Transverse colon (tissue), 4 donors: ENCODE measurements at regions of chr12 and their contacts with region 1.

Region 1: DNA sequence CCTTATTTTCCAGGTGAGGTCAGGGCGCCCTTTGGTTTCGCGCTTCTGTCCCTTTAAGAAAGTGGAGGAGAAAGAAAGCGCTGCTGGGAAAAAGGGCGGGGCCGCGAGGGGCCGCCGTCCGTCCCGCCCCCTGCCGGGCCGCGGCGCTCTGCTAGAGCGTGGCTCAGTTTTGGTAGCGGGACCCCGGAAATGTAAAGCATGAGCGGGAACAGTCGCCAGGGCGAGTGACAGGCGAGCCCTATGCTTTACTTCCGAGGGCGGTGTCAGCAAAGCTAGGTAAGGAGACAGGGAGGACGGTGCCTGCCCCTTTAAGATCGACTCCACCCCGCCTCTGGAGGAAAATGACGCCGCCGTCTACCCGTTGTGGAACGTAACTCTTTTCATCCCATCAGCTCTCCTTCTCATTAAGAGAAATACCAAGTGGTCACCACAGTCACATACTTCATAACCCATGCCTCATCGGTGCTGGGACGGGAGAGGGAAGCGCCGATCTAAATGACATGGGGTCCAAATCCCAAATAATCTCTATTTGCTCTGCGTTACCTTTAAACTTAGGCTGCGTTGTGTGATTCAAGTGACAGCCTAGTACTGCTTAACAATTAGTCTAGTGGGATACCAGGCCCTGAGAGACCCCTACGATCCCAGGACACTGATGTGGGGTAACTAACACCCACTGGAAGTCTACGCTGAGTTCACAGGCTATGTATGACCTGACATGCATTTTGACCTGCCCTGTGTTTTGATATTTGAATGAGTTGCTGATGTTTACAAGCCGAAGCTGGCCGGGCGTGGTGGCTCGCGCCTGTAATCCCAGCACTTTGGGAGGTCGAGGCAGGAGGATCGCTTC is at the start of gene ETFBKMT:
- DNase-seq: peak; percentile 93
- H3K4me3 ChIP-seq: peak within 1 kb of the TSS; percentile 51 to 79 (median 68)
- H3K27ac ChIP-seq: peak within 1 kb of the TSS; percentile 90 to 96 (median 92)
- H3K4me1 ChIP-seq: peaks cover 3 to 11% (median 10%) of the 10 kb centered on the region in 4 donors
- H3K27me3 ChIP-seq: no peaks in the 10 kb centered on the region
- CTCF ChIP-seq: peak; percentile 36 to 78 (median 45)
- EP300 ChIP-seq: no peak
- POLR2A ChIP-seq: peak; percentile 67
- total RNA-seq, gene ETFBKMT: 0.40 to 3.8 (median 3.1) TPM

Region 2: DNA sequence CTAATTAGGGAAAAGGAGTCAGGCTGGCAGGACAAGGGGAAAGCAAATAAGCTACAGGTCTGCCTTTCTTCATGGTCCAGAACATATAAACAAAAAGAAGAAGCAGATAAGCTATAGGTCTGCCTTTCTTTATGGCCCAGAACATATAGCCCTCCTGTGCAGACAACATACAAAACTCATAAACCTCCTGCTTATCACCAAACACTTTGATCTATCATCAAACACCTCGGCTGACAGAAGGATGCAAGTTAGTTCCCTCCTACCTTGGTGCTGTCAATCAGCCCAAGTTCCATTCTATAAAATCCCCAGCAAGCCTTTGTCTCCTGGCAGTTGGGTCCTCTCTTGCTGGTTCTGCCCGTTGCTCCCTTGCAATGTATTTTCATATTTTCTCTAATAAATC is 46.3 kb after region 1 on chr12:
- in situ Hi-C with region 1: no loop called
- intact Hi-C with region 1: no loop called
- DNase-seq: no peak
- H3K4me3 ChIP-seq: no peak overlapping the region
- H3K27ac ChIP-seq: no peak overlapping the region
- H3K4me1 ChIP-seq: no peaks in the 10 kb centered on the region
- H3K27me3 ChIP-seq: no peaks in the 10 kb centered on the region
- CTCF ChIP-seq: no peak
- EP300 ChIP-seq: no peak
- POLR2A ChIP-seq: no peak

Region 3: GRCh38 chr12:31728917-31729640 is 69.8 kb after region 1 on chr12 and contains the start of gene AMN1:
- in situ Hi-C with region 1: no loop called
- intact Hi-C with region 1: loop called (anchors 10 kb)
- DNase-seq: peak; percentile 100
- H3K4me3 ChIP-seq: peak within 1 kb of the TSS; percentile 63 to 79 (median 70)
- H3K27ac ChIP-seq: peak within 1 kb of the TSS; percentile 96 to 98 (median 97)
- H3K4me1 ChIP-seq: peaks cover 9 to 33% (median 14%) of the 10 kb centered on the region in 4 donors
- H3K27me3 ChIP-seq: no peaks in the 10 kb centered on the region
- CTCF ChIP-seq: peak in 3 of 5 experiments; percentile 10 to 56 (median 49)
- EP300 ChIP-seq: no peak
- POLR2A ChIP-seq: peak; percentile 81
- total RNA-seq, gene AMN1: 5.7 to 10.5 (median 8.7) TPM in 3 of 4 donors, not detected in the other

Region 4: GRCh38 chr12:31959161-31959700 is 299.9 kb after region 1 on chr12 and contains the start of gene RESF1:
- in situ Hi-C with region 1: loop called in 2 of 4 experiments (anchors 25 kb)
- intact Hi-C with region 1: loop called (anchors 5 kb)
- DNase-seq: peak; percentile 93
- H3K4me3 ChIP-seq: peak within 1 kb of the TSS; percentile 70 to 90 (median 78)
- H3K27ac ChIP-seq: peak within 1 kb of the TSS; percentile 94 to 98 (median 96)
- H3K4me1 ChIP-seq: peaks cover 10 to 30% (median 20%) of the 10 kb centered on the region in 4 donors
- H3K27me3 ChIP-seq: no peaks in the 10 kb centered on the region
- CTCF ChIP-seq: no peak
- EP300 ChIP-seq: no peak
- POLR2A ChIP-seq: peak; percentile 86
- total RNA-seq, gene RESF1: 23.3 to 81.8 (median 35.1) TPM

Region 5: GRCh38 chr12:32679091-32679919 is 1020.0 kb after region 1 on chr12 and contains the start of gene DNM1L:
- in situ Hi-C with region 1: loop called in 1 of 4 experiments (anchors 25 kb)
- intact Hi-C with region 1: no loop called
- DNase-seq: peak; percentile 95
- H3K4me3 ChIP-seq: peak within 1 kb of the TSS; percentile 50 to 97 (median 84)
- H3K27ac ChIP-seq: peak within 1 kb of the TSS; percentile 96 to 99 (median 98)
- H3K4me1 ChIP-seq: peaks cover 7 to 19% (median 14%) of the 10 kb centered on the region in 4 donors
- H3K27me3 ChIP-seq: no peaks in the 10 kb centered on the region
- CTCF ChIP-seq: peak in 3 of 5 experiments; percentile 14 to 24 (median 17)
- EP300 ChIP-seq: no peak
- POLR2A ChIP-seq: peak; percentile 90
- total RNA-seq, gene DNM1L: 41.2 to 61.3 (median 44.2) TPM